ENCODE measurements at regions of chr10 and their contacts with region 1.

Region 1: DNA sequence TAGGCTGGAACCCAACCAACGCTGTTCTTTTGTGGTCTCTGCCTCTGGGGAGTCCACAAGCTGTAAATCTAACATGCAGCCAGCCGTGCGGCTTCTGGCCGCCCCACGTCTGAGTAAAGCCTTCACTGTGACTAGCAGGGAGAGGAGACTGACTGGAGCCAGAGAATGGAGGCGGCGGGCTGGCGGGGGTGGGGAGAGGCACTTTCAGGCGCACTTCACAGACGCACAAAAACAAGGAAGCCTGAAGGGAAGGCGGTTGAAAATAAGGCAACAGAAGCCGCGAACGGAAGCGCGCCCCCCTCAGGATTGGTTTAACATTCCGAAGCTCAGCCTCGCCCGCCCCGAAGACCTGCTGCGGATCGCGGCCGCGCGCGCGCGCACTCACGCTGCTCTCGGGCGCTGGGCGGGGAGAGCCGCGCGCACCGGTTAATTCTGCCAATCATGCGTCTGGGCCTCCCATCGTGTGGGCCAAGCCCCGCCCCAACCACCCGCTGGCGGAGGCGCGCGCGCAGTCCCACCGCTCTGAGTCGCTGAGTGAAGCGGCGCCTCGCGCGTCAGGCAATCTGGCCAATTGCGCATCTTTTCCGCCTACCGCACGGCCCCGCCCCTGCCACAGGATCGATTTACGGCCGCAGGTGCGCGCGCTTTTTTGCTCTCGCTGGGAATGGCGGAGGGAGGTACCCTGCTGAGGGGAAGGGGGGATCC is at the start of gene SFR1:
- DNase-seq: peak; percentile 100
- ATAC-seq: peak; percentile 89
- H3K4me3 ChIP-seq: peak within 1 kb of the TSS; percentile 73 to 100 (median 97)
- H3K4me3 Mint-ChIP-seq: peak within 1 kb of the TSS; percentile 96
- H3K27ac ChIP-seq: peak within 1 kb of the TSS; percentile 98 to 99
- H3K27ac Mint-ChIP-seq: peak within 1 kb of the TSS; percentile 99
- H3K4me1 ChIP-seq: peaks cover 10 to 13% of the 10 kb centered on the region in 2 donors
- H3K4me1 Mint-ChIP-seq: peaks cover 19% of the 10 kb centered on the region
- H3K27me3 ChIP-seq: no peaks in the 10 kb centered on the region
- H3K27me3 Mint-ChIP-seq: no peaks in the 10 kb centered on the region
- CTCF ChIP-seq: peak; percentile 70
- total RNA-seq, gene SFR1: 15.1 and 15.3 TPM in 2 replicates

Region 2: DNA sequence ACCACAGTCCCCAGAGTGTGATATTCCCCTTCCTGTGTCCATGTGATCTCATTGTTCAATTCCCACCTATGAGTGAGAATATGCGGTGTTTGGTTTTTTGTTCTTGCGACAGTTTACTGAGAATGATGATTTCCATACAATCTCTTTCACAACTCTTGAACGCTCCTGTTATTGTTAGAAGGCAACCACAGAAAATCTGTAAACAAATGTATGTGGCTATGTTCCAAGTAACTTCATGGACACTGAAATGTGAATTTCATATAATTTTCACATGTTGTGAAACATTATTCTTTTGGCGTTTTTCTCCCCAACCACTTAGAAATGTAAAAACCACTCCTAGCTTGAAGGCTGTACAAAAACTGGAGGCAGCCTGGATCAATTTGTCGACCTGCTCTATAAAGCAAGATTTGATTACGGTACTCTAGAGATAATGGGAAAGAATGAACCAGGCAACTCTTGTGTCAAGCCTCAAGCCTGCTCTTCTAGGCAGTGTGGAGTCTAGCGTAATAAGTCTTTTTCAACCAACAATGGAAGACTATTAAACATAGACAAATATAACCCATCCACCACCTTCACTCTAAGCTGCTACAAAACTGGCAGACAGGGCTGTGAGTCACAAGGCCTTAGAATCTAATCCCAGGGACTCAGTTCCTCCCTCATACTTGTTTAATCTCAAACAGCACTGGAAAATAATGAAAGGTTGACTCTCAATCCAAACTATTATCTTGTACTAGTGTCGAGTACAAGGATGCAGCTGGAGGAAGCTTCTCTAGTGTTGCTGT is 1430.2 kb before region 1 on chr10:
- CTCF ChIA-PET with region 1: no interaction called
- POLR2A ChIA-PET with region 1: no interaction called
- intact Hi-C with region 1: no loop called
- DNase-seq: no peak
- ATAC-seq: no peak
- H3K4me3 ChIP-seq: no peak overlapping the region
- H3K4me3 Mint-ChIP-seq: no peak overlapping the region
- H3K27ac ChIP-seq: no peak overlapping the region
- H3K27ac Mint-ChIP-seq: no peak overlapping the region
- H3K4me1 ChIP-seq: no peaks in the 10 kb centered on the region
- H3K4me1 Mint-ChIP-seq: no peaks in the 10 kb centered on the region
- H3K27me3 ChIP-seq: no peaks in the 10 kb centered on the region
- H3K27me3 Mint-ChIP-seq: no peaks in the 10 kb centered on the region
- CTCF ChIP-seq: no peak

Region 3: DNA sequence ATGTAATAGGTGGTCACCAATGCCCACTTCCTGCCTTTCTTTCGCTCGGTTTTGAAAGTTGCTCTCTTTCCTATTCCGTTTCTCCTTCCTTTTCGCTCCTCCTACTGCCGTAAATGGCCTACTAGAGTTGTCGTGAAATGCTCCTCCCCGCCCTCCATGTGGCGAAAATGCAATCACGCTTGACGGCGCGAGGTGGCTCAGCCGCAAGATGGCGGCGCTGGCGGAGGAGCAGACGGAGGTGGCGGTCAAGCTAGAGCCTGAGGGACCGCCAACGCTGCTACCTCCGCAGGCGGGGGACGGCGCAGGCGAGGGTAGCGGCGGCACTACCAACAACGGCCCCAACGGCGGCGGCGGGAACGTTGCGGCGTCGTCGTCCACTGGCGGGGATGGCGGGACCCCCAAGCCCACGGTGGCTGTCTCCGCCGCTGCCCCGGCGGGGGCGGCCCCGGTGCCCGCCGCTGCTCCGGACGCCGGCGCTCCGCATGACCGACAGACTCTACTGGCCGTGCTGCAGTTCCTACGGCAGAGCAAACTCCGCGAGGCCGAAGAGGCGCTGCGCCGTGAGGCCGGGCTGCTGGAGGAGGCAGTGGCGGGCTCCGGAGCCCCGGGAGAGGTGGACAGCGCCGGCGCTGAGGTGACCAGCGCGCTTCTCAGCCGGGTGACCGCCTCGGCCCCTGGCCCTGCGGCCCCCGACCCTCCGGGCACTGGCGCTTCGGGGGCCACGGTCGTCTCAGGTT is 753.7 kb before region 1 on chr10 and contains the start of gene TAF5:
- CTCF ChIA-PET with region 1: no interaction called
- POLR2A ChIA-PET with region 1: no interaction called
- intact Hi-C with region 1: loop called (anchors 5 kb)
- DNase-seq: peak; percentile 95
- ATAC-seq: peak; percentile 71
- H3K4me3 ChIP-seq: peak within 1 kb of the TSS; percentile 59 to 93 (median 88)
- H3K4me3 Mint-ChIP-seq: peak within 1 kb of the TSS; percentile 98
- H3K27ac ChIP-seq: peak within 1 kb of the TSS; percentile 62 to 81
- H3K27ac Mint-ChIP-seq: peak within 1 kb of the TSS; percentile 97
- H3K4me1 ChIP-seq: peaks cover 3 to 16% of the 10 kb centered on the region in 2 donors
- H3K4me1 Mint-ChIP-seq: peaks cover 10% of the 10 kb centered on the region
- H3K27me3 ChIP-seq: no peaks in the 10 kb centered on the region
- H3K27me3 Mint-ChIP-seq: no peaks in the 10 kb centered on the region
- CTCF ChIP-seq: no peak
- total RNA-seq, gene TAF5: 5.5 and 6.5 TPM in 2 replicates

Region 4: GRCh38 chr10:103659674-103660363 is 461.9 kb before region 1 on chr10:
- CTCF ChIA-PET with region 1: no interaction called
- POLR2A ChIA-PET with region 1: no interaction called
- intact Hi-C with region 1: no loop called
- DNase-seq: peak; percentile 66
- ATAC-seq: peak; percentile 69
- H3K4me3 ChIP-seq: peak overlapping the region in 4 of 5 experiments; percentile 55 to 71 (median 64)
- H3K4me3 Mint-ChIP-seq: peak overlapping the region; percentile 87
- H3K27ac ChIP-seq: peak overlapping the region; percentile 54 to 78
- H3K27ac Mint-ChIP-seq: peak overlapping the region; percentile 78
- H3K4me1 ChIP-seq: peaks cover 8 to 14% of the 10 kb centered on the region in 2 donors
- H3K4me1 Mint-ChIP-seq: peaks cover 14% of the 10 kb centered on the region
- H3K27me3 ChIP-seq: no peaks in the 10 kb centered on the region
- H3K27me3 Mint-ChIP-seq: no peaks in the 10 kb centered on the region
- CTCF ChIP-seq: no peak

Region 5: DNA sequence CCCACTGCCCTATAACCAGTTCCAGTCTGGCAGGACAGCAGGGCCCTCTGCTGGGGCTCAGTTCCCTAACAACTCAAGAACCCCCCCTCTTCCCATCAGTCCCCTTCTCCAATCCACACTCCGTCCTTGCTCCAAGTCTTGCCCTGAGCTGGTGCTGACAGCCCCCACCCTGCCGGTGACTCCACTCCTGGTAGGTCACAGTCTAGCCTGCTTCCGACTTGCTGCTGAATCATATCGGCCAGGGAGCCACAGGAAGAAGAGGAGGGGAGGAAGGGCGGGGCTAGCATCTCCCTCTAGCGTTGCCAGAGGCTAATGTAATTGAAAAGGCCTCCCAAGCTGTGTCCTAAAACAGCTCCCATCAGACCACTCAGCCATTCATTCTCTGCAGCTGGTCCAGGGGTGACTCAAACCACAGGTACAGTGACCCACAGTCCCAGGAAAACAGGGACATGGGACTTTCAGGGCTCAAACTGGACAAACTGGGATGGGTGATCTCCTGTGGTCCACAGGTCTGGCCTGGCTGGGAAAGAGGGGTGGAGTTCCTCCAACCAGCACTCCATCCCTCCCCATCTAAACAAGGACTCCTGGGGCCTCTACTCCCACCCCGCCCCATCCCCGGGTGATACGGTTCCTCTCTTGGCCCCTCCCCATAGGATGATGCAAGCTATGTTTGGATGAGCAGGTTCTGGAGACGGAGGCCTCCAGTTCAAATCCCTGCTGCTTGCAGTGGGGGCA is 425.1 kb before region 1 on chr10:
- CTCF ChIA-PET with region 1: no interaction called
- POLR2A ChIA-PET with region 1: no interaction called
- intact Hi-C with region 1: loop called (anchors 1 kb)
- DNase-seq: peak; percentile 57
- ATAC-seq: no peak
- H3K4me3 ChIP-seq: no peak overlapping the region
- H3K4me3 Mint-ChIP-seq: peak overlapping the region; percentile 51
- H3K27ac ChIP-seq: no peak overlapping the region
- H3K27ac Mint-ChIP-seq: no peak overlapping the region
- H3K4me1 ChIP-seq: peaks cover 25 to 42% of the 10 kb centered on the region in 2 donors
- H3K4me1 Mint-ChIP-seq: peaks cover 35% of the 10 kb centered on the region
- H3K27me3 ChIP-seq: peaks cover 0 to 3% (median 1%) of the 10 kb centered on the region in 4 experiments
- H3K27me3 Mint-ChIP-seq: no peaks in the 10 kb centered on the region
- CTCF ChIP-seq: peak; percentile 25

Region 6: DNA sequence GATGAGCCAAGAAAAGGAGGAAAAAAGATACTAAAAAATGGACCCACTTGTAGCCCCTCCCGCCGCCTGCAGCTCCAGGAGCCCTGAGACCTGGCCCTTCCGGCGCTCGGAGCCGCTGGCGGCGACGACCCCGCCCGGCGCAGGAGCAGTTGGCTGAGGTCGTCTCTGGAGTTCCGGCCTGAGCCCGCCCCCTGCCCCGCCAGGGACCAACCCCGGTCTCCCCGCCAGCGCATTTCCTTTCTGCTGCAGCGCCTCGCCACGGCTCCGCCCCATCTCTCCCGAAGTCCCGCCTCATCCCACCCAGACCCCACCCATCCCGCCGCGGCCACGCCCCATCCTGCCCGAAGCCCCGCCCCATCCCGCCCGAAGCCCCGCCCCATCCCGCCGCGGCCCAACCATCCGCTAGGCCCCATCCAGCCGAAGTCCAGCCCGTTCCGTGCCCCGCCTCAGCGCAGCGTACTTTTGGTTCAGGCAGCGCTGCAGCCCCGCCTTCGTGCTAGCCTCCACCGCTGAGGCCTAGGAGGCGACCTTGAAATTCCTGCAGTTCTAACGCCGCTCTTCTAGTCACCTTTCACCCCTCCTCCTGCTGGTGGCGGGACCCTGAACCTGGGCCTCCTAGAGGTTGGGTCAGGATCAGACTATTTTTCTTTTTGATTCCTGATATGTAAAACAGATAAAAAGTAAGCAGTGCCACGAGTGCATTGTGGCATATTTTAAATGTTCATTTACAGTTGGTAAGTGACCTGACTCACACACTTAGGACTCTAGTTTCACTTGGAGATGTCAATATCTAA is 203.4 kb before region 1 on chr10 and contains the start of gene STN1:
- CTCF ChIA-PET with region 1: interaction called, 6 read pairs
- POLR2A ChIA-PET with region 1: interaction called, 16 read pairs
- intact Hi-C with region 1: loop called (anchors 1 kb)
- DNase-seq: peak; percentile 96
- ATAC-seq: peak; percentile 93
- H3K4me3 ChIP-seq: peak within 1 kb of the TSS; percentile 67 to 95 (median 94)
- H3K4me3 Mint-ChIP-seq: peak within 1 kb of the TSS; percentile 99
- H3K27ac ChIP-seq: peak within 1 kb of the TSS; percentile 78 to 85
- H3K27ac Mint-ChIP-seq: peak within 1 kb of the TSS; percentile 96
- H3K4me1 ChIP-seq: peaks cover 27 to 38% of the 10 kb centered on the region in 2 donors
- H3K4me1 Mint-ChIP-seq: peaks cover 33% of the 10 kb centered on the region
- H3K27me3 ChIP-seq: no peaks in the 10 kb centered on the region
- H3K27me3 Mint-ChIP-seq: no peaks in the 10 kb centered on the region
- CTCF ChIP-seq: no peak
- total RNA-seq, gene STN1: 16.3 and 16.8 TPM in 2 replicates

Region 7: DNA sequence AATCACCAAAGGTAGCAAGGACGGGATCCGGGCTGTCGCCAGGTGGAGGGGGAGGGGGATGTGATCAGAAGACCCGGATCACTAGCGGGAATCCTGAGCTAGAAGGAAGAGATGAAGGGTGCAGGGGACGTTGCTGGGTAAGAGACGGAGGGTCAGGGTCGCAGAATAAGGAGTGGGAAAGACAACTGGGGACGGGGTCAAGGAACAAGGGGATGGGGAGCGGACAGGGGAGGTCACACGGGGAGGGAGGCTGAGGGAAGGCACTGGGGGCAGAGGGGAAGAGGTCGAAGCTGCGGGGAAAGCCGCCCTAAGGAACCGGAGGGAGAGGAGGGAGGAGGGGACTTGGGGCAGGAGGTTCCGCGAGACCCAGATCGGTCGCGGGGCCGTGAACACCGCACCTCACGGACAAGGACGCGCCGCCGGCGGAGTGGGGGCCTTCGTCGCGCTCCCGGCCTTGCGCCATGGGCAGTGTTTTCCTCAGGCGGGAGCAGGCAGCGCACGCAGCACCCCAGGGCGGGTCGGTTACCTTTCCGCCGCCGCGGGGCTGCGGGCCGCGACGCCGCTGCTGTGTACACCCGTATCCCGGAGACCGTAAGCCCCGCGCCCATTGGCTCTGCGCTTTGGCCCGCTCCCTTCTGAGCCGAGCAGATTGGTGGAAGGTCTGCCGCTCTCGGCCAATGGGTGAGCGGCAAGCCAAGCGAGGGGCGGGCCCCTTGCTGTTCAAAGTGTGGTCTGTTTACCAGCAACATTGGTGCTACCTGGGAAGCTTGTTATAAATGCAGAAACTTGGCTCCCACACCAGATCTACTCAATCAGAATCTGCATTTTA is 110.3 kb after region 1 on chr10 and contains the start of gene CFAP43:
- CTCF ChIA-PET with region 1: no interaction called
- POLR2A ChIA-PET with region 1: no interaction called
- intact Hi-C with region 1: loop called (anchors 1 kb)
- DNase-seq: peak; percentile 97
- ATAC-seq: peak; percentile 99
- H3K4me3 ChIP-seq: peak within 1 kb of the TSS; percentile 52 to 86 (median 67)
- H3K4me3 Mint-ChIP-seq: peak within 1 kb of the TSS; percentile 89
- H3K27ac ChIP-seq: peak within 1 kb of the TSS in 1 of 2 donors; percentile 66
- H3K27ac Mint-ChIP-seq: peak within 1 kb of the TSS; percentile 84
- H3K4me1 ChIP-seq: peaks cover 6 to 13% of the 10 kb centered on the region in 2 donors
- H3K4me1 Mint-ChIP-seq: peaks cover 10% of the 10 kb centered on the region
- H3K27me3 ChIP-seq: peaks cover 0 to 19% (median 13%) of the 10 kb centered on the region in 4 experiments
- H3K27me3 Mint-ChIP-seq: peaks cover 26% of the 10 kb centered on the region
- CTCF ChIP-seq: no peak
- total RNA-seq, gene CFAP43: 0.12 TPM in 1 of 2 replicates, not detected in the other

Region 8: GRCh38 chr10:104291439-104291951 is 169.8 kb after region 1 on chr10:
- CTCF ChIA-PET with region 1: no interaction called
- POLR2A ChIA-PET with region 1: no interaction called
- intact Hi-C with region 1: loop called (anchors 1 kb)
- DNase-seq: peak; percentile 91
- ATAC-seq: peak; percentile 100
- H3K4me3 ChIP-seq: no peak overlapping the region
- H3K4me3 Mint-ChIP-seq: peak overlapping the region; percentile 44
- H3K27ac ChIP-seq: no peak overlapping the region
- H3K27ac Mint-ChIP-seq: peak overlapping the region; percentile 28
- H3K4me1 ChIP-seq: peaks cover 4 to 8% of the 10 kb centered on the region in 2 donors
- H3K4me1 Mint-ChIP-seq: peaks cover 5% of the 10 kb centered on the region
- H3K27me3 ChIP-seq: peaks cover 0 to 16% (median 6%) of the 10 kb centered on the region in 4 experiments
- H3K27me3 Mint-ChIP-seq: peaks cover 34% of the 10 kb centered on the region
- CTCF ChIP-seq: peak; percentile 100

Region 9: GRCh38 chr10:104353325-104354048 is 231.8 kb after region 1 on chr10 and contains the start of gene CFAP58:
- CTCF ChIA-PET with region 1: interaction called, 4 read pairs
- POLR2A ChIA-PET with region 1: no interaction called
- intact Hi-C with region 1: loop called (anchors 1 kb)
- DNase-seq: peak; percentile 95
- ATAC-seq: peak; percentile 87
- H3K4me3 ChIP-seq: peak within 1 kb of the TSS; percentile 46 to 66 (median 51)
- H3K4me3 Mint-ChIP-seq: peak within 1 kb of the TSS; percentile 52
- H3K27ac ChIP-seq: peak within 1 kb of the TSS; percentile 20 to 23
- H3K27ac Mint-ChIP-seq: peak within 1 kb of the TSS; percentile 64
- H3K4me1 ChIP-seq: peaks cover 32 to 43% of the 10 kb centered on the region in 2 donors
- H3K4me1 Mint-ChIP-seq: peaks cover 19% of the 10 kb centered on the region
- H3K27me3 ChIP-seq: peaks cover 0 to 5% (median 0%) of the 10 kb centered on the region in 4 experiments
- H3K27me3 Mint-ChIP-seq: no peaks in the 10 kb centered on the region
- CTCF ChIP-seq: peak; percentile 79
- total RNA-seq, gene CFAP58: not detected in 2 replicates